ENCODE measurements at regions of chr5 and their contacts with region 1.

Region 1: GRCh38 chr5:112737463-112738190 is at the start of gene APC:
- DNase-seq: peak; percentile 72
- ATAC-seq: peak; percentile 97
- H3K4me3 Mint-ChIP-seq: peak within 1 kb of the TSS; percentile 96
- H3K27ac Mint-ChIP-seq: peak within 1 kb of the TSS; percentile 65
- H3K4me1 Mint-ChIP-seq: peaks cover 25% of the 10 kb centered on the region
- H3K27me3 Mint-ChIP-seq: no peaks in the 10 kb centered on the region
- CTCF ChIP-seq: no peak
- total RNA-seq, gene APC: 35.8 and 41.7 TPM in 2 replicates

Region 2: GRCh38 chr5:112717506-112718082 is 20.0 kb before region 1 on chr5:
- CTCF ChIA-PET with region 1: no interaction called
- POLR2A ChIA-PET with region 1: no interaction called
- intact Hi-C with region 1: loop called (anchors 2 kb)
- DNase-seq: no peak
- ATAC-seq: no peak
- H3K4me3 Mint-ChIP-seq: no peak overlapping the region
- H3K27ac Mint-ChIP-seq: no peak overlapping the region
- H3K4me1 Mint-ChIP-seq: peaks cover 57% of the 10 kb centered on the region
- H3K27me3 Mint-ChIP-seq: no peaks in the 10 kb centered on the region
- CTCF ChIP-seq: no peak

Region 3: GRCh38 chr5:112752335-112752734 is 14.7 kb after region 1 on chr5:
- CTCF ChIA-PET with region 1: interaction called, 3 read pairs
- POLR2A ChIA-PET with region 1: no interaction called
- intact Hi-C with region 1: loop called (anchors 1 kb)
- DNase-seq: no peak
- ATAC-seq: no peak
- H3K4me3 Mint-ChIP-seq: no peak overlapping the region
- H3K27ac Mint-ChIP-seq: no peak overlapping the region
- H3K4me1 Mint-ChIP-seq: peaks cover 16% of the 10 kb centered on the region
- H3K27me3 Mint-ChIP-seq: no peaks in the 10 kb centered on the region
- CTCF ChIP-seq: no peak